AG04449 (cell line): ENCODE measurements at regions of chr9 and their contacts with region 1.

Region 1: DNA sequence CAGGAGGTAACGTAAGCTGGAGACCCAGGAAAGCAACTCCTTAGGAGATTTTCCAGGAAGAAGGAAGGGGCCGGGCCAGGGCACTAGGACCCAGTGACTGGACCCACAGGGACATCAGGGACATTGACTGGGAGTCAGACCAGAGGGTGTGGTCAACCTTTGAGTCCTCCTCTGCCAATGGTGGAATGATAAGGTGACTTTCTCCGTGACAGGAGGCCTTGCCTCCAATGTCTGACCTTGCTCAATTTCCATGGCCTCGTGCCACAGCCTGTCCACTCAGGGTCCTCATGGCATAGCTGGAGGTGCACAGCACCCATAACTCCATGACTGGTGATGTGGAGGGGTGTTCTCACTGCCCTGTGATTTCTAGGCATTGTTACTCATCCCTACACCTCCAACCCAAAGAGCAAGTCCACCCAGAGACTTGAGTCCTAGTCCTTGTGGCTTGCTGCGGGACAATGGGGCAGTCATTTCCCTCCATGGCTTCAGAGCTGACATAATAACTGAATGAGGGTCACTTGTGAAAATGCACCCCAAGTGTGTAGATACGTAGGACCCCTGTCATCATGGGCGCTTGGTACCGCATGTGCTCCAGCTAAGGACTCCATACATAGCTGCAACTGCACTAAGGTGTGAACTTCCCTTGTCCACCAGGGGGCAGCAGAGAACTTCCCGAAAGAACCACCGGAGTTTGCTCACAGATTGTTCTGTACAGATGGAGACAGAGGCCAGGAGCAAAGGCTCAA is 4.1 kb upstream of the AMBP start:
- DNase-seq: peak; percentile 41
- H3K4me3 ChIP-seq: no peak overlapping the region
- CTCF ChIP-seq: peak; percentile 85

Region 2: DNA sequence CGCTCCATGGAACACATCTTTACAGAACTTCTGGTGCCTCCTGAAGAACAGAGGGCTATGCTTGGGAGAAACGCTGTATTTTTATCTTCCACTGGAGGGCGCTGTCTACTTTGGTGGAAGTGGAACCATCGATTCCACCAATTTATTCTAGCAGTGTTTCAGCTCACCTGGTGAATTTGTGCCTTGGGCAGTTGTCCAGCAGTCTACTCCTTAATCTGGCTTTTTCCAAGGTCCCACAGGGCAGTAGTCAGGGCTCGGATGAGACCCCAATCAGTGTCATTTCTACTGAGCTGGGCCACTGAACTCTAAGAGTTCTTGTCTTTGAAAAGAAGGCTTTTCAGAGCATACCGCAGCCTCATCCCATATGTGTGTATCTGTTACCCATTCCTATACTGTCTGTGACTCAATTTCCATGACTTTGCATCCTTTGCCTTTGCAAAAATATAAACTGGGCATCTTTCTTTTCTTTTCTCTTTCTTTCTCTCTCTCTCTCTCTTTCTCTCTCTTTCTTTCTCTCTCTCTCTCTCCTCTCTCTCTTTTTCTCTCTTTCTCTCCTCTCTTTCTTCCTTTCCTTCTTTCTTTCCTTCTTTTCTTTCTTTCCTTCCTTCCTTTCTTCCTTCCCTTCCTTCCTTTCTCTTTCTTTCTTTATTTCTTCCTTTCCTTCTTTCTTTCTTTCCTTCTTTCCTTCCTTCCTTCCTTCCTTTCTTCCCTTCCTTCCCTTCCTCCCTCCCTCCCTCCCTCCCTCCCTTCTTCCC is 344.5 kb before region 1 on chr9:
- CTCF ChIA-PET with region 1: interaction called, 19 read pairs
- POLR2A ChIA-PET with region 1: no interaction called
- DNase-seq: no peak
- H3K4me3 ChIP-seq: no peak overlapping the region
- CTCF ChIP-seq: peak; percentile 74

Region 3: DNA sequence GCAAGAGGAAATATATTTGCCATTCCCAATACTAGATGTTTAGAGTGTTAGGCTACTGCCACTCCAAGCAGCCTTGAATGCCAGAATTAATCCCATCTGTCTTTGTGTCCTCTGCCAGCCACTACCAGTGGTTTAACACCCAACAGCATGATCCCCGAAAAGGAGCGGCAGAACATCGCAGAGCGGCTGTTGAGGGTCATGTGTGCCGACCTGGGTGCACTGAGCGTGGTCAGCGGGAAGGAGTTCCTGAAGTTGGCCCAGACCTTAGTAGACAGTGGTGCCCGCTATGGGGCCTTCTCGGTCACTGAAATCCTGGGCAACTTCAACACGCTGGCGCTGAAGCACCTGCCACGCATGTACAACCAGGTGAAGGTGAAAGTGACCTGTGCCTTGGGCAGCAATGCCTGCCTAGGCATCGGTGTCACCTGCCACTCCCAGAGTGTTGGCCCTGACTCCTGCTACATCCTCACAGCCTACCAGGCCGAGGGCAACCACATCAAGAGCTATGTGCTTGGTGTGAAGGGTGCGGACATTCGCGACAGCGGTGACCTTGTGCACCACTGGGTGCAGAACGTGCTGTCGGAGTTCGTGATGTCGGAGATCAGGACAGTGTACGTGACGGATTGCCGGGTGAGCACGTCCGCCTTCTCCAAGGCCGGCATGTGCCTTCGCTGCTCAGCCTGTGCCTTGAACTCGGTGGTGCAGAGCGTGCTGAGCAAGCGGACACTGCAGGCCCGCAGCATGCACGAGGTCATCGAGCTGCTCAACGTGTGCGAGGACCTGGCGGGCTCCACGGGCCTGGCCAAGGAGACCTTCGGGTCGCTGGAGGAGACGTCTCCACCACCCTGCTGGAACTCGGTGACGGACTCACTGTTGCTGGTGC is 33.4 kb before region 1 on chr9:
- CTCF ChIA-PET with region 1: interaction called, 10 read pairs
- POLR2A ChIA-PET with region 1: no interaction called
- DNase-seq: no peak
- H3K4me3 ChIP-seq: no peak overlapping the region
- CTCF ChIP-seq: no peak

Region 4: GRCh38 chr9:114098016-114098935 is 16.1 kb after region 1 on chr9:
- CTCF ChIA-PET with region 1: interaction called, 118 read pairs
- POLR2A ChIA-PET with region 1: no interaction called
- DNase-seq: no peak
- H3K4me3 ChIP-seq: peak overlapping the region; percentile 37
- CTCF ChIP-seq: no peak

Region 5: DNA sequence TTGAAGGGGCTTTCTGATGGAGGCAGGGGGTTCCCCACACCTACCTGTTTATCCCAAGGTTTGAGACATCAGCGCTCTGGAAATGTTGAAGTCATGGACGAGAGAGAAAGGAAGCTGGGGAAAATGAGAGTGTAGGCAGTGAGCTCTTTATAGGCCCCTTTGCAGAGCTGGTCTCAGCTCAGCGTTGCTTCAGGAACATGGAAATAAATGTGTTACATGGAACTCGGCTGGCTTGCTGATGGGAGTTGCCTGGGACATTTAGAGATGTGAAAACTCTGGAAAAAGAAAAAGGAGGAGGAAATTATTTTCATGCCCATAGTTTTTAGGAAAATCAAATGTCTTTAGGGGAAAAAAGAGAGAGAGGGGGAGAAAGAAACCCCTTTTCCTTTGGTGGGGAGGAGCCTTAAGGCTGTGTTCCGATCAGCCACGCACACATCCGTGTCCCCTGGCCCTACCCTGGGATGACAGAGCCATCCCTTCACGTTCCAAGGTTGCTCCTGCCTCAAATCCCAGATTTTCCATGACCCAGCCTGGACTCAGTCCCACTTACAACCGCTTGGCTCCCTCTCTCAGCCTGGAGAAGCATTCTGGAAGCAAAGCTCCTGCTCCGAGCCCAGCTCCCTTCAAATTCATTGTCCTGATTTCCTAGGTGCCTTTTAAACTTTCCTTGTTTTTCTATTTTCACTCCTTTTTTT is 151.4 kb after region 1 on chr9:
- CTCF ChIA-PET with region 1: interaction called, 13 read pairs
- POLR2A ChIA-PET with region 1: no interaction called
- DNase-seq: no peak
- H3K4me3 ChIP-seq: no peak overlapping the region
- CTCF ChIP-seq: no peak

Region 6: DNA sequence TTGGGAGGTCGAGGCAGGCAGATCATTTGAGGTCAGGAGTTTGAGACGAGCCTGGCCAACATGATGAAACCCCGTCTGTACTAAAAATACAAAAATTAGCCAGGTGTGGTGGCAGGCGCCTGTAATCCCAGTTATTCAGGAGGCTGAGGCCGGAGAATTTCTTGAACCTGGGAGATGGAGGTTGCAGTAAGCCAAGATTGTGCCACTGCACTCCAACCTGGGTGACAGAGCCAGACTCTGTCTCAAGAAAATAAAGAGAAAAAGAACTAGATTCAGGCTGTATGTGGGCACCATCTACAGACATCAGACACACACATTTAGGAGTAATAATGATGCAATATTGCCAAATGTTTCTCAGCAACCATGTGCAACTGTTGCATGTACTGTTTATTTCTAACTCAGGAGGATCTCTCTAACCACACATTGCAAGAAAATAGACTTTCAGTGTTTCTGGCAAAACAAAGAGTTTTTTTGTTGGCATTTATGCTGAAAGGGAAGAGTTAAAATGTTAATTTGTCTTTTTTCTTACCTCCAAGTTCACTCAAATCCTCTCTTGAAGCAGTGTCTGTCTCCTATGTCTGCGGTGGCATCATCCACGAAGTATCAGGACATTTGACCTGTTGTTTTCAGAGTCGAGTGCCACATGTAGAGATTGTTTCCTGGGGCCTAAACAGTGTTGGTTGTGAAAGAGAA is 235.6 kb after region 1 on chr9:
- CTCF ChIA-PET with region 1: interaction called, 15 read pairs
- POLR2A ChIA-PET with region 1: no interaction called
- DNase-seq: peak; percentile 47
- H3K4me3 ChIP-seq: no peak overlapping the region
- CTCF ChIP-seq: no peak